Endothelial cell of umbilical vein (primary cell): ENCODE measurements at regions of chr17 and their contacts with region 1.

Region 1: DNA sequence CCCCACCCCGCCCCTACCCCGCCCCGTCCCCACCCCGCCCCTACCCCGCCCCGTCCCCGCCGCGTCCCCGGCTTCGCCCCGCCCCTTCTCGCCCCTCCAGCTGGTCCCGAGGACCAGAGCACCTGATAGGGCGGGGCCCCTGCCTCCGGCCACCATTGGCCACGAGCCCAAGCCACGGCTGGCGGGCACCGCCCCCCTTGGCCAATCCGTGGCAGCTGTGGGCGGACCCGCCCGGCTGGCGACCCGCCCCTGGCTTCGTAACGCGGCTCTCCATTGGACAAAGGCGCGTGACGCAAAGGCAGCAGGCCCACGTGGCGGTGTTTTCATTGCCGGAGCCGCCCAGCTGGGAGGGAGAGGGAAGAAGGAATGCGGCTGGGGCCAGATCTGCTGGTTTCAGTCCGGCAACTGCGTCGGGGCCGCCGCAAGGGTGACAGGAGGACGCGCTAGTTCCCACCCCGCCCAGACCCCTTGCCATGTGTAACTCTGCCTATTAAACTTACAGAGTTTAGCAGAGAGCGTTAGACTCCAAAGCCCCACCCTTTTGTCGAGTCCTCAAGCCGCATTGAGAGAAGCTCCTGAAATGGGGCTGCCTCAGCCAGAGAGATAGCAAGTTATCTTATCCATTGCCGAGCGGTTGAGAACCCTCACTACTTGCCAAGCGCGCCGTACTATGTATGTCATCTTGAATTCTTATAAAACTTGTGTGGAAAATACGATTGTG is 403 bp upstream of the WIPI1 start:
- DNase-seq: peak; percentile 99
- H3K4me3 ChIP-seq: peak overlapping the region; percentile 20 to 54 (median 48)
- H3K27ac ChIP-seq: no peak overlapping the region
- H3K4me1 ChIP-seq: peaks cover 18% of the 10 kb centered on the region
- H3K27me3 ChIP-seq: no peaks in the 10 kb centered on the region
- CTCF ChIP-seq: no peak
- POLR2A ChIP-seq: peak; percentile 31

Region 2: DNA sequence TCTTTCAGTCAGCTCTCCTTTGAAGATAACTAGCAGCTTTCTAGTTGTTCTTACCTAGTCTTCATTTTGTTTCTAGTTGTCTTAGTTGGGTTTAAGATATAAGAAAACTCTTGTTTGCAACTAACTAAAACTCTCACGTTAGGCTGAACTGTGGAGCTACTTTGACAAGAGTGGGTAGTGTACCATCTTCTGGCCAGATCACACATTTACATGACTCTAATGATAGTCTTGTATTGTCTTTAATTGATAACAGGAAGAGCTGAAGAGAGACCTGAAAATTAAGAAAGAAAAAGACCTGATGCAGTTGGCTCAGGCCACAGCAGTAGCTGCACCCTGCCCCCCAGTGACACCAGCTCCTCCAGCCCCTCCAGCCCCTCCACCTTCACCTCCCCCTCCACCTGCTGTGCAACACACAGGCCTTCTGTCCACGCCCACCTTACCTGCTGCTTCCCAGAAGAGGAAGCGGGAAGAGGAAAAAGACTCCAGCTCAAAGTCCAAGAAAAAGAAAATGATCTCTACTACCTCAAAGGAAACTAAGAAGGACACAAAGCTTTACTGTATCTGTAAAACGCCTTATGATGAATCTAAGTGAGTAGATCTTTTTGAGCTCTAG is 498.3 kb before region 1 on chr17:
- CTCF ChIA-PET with region 1: interaction called, 5 read pairs
- POLR2A ChIA-PET with region 1: no interaction called
- dilution Hi-C with region 1: no loop called
- intact Hi-C with region 1: loop called (anchors 5 kb)
- DNase-seq: no peak
- H3K4me3 ChIP-seq: no peak overlapping the region
- H3K27ac ChIP-seq: no peak overlapping the region
- H3K4me1 ChIP-seq: peaks cover 2% of the 10 kb centered on the region
- H3K27me3 ChIP-seq: no peaks in the 10 kb centered on the region
- CTCF ChIP-seq: no peak
- POLR2A ChIP-seq: no peak

Region 3: DNA sequence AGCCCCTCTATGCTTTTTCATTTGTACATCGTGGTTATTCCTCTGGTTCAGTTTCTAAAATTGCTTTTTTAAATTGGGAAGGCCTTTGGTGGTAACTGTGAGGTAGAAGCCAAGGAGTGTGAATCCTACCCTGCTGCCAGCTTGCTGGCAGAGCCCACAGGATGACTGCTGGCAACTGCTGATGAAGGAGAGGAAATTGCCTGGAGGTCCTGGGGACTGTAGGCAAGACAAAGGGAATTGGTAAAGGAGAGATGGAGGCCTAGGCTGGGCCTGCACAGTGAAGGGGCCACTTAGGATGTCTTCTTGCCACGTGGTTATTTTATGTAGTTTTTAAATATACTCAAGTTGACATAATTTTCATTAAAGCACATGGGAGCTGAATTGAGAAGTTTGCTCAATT is 477.2 kb before region 1 on chr17:
- CTCF ChIA-PET with region 1: no interaction called
- POLR2A ChIA-PET with region 1: no interaction called
- dilution Hi-C with region 1: no loop called
- intact Hi-C with region 1: no loop called
- DNase-seq: no peak
- H3K4me3 ChIP-seq: no peak overlapping the region
- H3K27ac ChIP-seq: no peak overlapping the region
- H3K4me1 ChIP-seq: peaks cover 3% of the 10 kb centered on the region
- H3K27me3 ChIP-seq: no peaks in the 10 kb centered on the region
- CTCF ChIP-seq: no peak
- POLR2A ChIP-seq: no peak

Region 4: DNA sequence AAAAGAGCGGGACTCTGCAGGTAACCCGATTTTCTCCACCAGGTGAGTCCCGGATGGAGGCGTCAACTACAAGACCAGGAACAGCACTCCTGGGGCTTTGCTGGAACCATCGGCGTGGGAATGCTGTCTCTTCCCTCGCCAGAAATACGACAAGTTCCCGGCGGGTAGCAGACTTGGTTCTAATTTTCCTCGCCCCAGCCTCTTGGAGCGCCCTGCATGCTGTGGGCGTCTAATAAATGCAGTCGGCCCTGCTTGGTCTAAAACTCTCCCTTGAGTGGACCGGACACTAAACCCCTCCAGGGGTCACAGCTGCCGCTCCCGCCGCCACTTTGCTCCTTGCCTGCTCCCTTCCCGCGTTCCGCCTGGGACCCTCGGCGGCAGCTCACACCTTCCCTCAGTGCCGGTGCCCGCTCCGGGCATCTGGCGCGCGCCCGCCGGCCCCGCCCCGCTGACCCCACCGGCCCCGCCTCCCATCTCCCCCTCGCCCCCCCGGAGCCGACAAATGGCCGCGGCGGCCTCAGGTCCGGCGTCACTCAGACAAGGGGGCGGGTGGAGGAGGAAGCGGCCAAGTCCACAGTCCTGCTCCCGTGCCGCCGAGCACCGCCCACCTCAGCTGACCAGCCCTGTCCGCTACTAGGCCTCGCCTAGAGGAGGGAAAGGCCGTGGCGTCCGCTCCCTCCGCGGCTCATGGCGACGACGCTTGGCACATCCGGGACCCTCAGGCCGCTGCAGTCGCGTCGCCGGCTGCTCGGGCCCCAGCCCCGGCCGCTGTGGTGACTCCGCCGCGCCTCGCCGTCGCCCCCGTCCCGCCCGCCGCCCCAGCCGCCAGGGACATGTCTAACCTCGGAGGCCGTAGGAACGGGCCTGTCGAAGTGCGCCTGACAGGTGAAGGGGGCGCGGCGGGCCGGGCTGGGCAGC is 356.4 kb before region 1 on chr17:
- CTCF ChIA-PET with region 1: no interaction called
- POLR2A ChIA-PET with region 1: no interaction called
- dilution Hi-C with region 1: no loop called
- intact Hi-C with region 1: loop called (anchors 5 kb)
- DNase-seq: peak; percentile 89
- H3K4me3 ChIP-seq: peak overlapping the region; percentile 48 to 88 (median 54)
- H3K27ac ChIP-seq: peak overlapping the region; percentile 27
- H3K4me1 ChIP-seq: no peaks in the 10 kb centered on the region
- H3K27me3 ChIP-seq: no peaks in the 10 kb centered on the region
- CTCF ChIP-seq: no peak
- POLR2A ChIP-seq: peak; percentile 74

Region 5: GRCh38 chr17:68205251-68205807 is 252.4 kb before region 1 on chr17:
- CTCF ChIA-PET with region 1: interaction called, 15 read pairs
- POLR2A ChIA-PET with region 1: no interaction called
- dilution Hi-C with region 1: no loop called
- intact Hi-C with region 1: loop called (anchors 2 kb)
- DNase-seq: peak; percentile 88
- H3K4me3 ChIP-seq: peak overlapping the region; percentile 38 to 56 (median 50)
- H3K27ac ChIP-seq: peak overlapping the region; percentile 52
- H3K4me1 ChIP-seq: peaks cover 4% of the 10 kb centered on the region
- H3K27me3 ChIP-seq: peaks cover 0 to under 1% of the 10 kb centered on the region in 2 experiments
- CTCF ChIP-seq: peak; percentile 84 to 96
- POLR2A ChIP-seq: peak; percentile 77

Region 6: GRCh38 chr17:68383443-68384321 is 74.0 kb before region 1 on chr17:
- CTCF ChIA-PET with region 1: no interaction called
- POLR2A ChIA-PET with region 1: no interaction called
- dilution Hi-C with region 1: no loop called
- intact Hi-C with region 1: loop called (anchors 1 kb)
- DNase-seq: peak; percentile 82
- H3K4me3 ChIP-seq: no peak overlapping the region
- H3K27ac ChIP-seq: peak overlapping the region; percentile 76
- H3K4me1 ChIP-seq: peaks cover 37% of the 10 kb centered on the region
- H3K27me3 ChIP-seq: no peaks in the 10 kb centered on the region
- CTCF ChIP-seq: no peak
- POLR2A ChIP-seq: peak; percentile 20

Region 7: GRCh38 chr17:68441064-68441770 is 16.5 kb before region 1 on chr17:
- CTCF ChIA-PET with region 1: interaction called, 35 read pairs
- POLR2A ChIA-PET with region 1: no interaction called
- dilution Hi-C with region 1: no loop called
- intact Hi-C with region 1: loop called (anchors 1 kb)
- DNase-seq: peak; percentile 94
- H3K4me3 ChIP-seq: peak overlapping the region in 1 of 3 experiments; percentile 11
- H3K27ac ChIP-seq: peak overlapping the region; percentile 84
- H3K4me1 ChIP-seq: peaks cover 46% of the 10 kb centered on the region
- H3K27me3 ChIP-seq: no peaks in the 10 kb centered on the region
- CTCF ChIP-seq: no peak
- POLR2A ChIP-seq: peak; percentile 25